ENCODE measurements at regions of chr9 and their contacts with region 1.

Region 1: GRCh38 chr9:94603259-94604160 is 9.9 kb upstream of the FBP2 start:
- DNase-seq: peak; percentile 70 to 78
- H3K4me3 ChIP-seq: no peak overlapping the region
- H3K27ac ChIP-seq: no peak overlapping the region
- H3K4me1 ChIP-seq: no peaks in the 10 kb centered on the region
- H3K27me3 ChIP-seq: no peaks in the 10 kb centered on the region
- CTCF ChIP-seq: peak; percentile 9 to 46 (median 29)
- POLR2A ChIP-seq: no peak

Region 2: GRCh38 chr9:94097788-94098414 is 505.6 kb before region 1 on chr9:
- intact Hi-C with region 1: loop called (anchors 10 kb)
- DNase-seq: peak in 1 of 2 donors; percentile 35
- H3K4me3 ChIP-seq: no peak overlapping the region
- H3K27ac ChIP-seq: no peak overlapping the region
- H3K4me1 ChIP-seq: no peaks in the 10 kb centered on the region
- H3K27me3 ChIP-seq: no peaks in the 10 kb centered on the region
- CTCF ChIP-seq: no peak
- POLR2A ChIP-seq: no peak

Region 3: DNA sequence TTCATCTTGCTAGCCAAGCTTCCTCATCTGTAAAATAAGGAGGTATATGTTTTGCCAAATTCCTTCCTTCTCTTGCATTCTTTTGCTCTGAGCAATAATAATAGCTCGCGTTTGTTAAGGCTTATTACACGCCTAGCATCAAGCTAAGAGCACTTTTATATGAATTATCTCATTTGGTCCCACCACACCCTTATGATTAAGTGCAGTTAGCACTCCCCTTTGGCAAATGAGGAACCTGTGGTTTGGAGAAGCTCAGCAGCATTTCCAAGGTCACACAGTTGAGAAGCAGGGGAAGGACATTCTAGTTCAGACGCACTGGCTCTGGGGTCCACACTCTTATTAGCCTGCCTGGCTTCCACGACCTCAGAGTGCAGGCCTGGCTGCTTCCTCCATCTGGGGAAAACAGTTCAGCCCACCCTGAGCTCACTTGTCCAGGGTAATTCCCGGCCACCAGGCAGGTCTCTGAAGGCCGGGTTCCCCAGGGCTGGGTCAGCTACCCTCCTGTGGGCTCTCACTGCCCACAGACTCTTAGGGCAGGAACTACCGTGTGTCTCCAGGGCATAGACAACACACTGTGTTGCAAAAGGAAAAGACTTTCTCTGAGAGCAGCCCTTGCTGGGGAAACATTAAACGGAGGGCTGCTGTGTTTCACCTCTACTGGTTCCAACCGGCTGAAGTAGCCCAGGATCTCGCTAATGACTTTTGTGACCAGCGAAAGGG is 45.8 kb after region 1 on chr9:
- intact Hi-C with region 1: no loop called
- DNase-seq: no peak
- H3K4me3 ChIP-seq: no peak overlapping the region
- H3K27ac ChIP-seq: no peak overlapping the region
- H3K4me1 ChIP-seq: no peaks in the 10 kb centered on the region
- H3K27me3 ChIP-seq: no peaks in the 10 kb centered on the region
- CTCF ChIP-seq: no peak
- POLR2A ChIP-seq: no peak